ENCODE measurements at regions of chr9 and their contacts with region 1.

Region 1: GRCh38 chr9:99162759-99163364 is 57.9 kb downstream of the TGFBR1 start:
- DNase-seq: no peak
- ATAC-seq: peak; percentile 55
- H3K4me3 Mint-ChIP-seq: no peak overlapping the region
- H3K27ac Mint-ChIP-seq: peak overlapping the region; percentile 66
- H3K4me1 Mint-ChIP-seq: peaks cover 45% of the 10 kb centered on the region
- H3K27me3 Mint-ChIP-seq: no peaks in the 10 kb centered on the region
- CTCF ChIP-seq: peak; percentile 22

Region 2: GRCh38 chr9:99513441-99514112 is 350.7 kb after region 1 on chr9:
- CTCF ChIA-PET with region 1: no interaction called
- POLR2A ChIA-PET with region 1: no interaction called
- intact Hi-C with region 1: loop called (anchors 5 kb)
- DNase-seq: peak; percentile 22
- ATAC-seq: peak; percentile 49
- H3K4me3 Mint-ChIP-seq: peak overlapping the region; percentile 61
- H3K27ac Mint-ChIP-seq: peak overlapping the region; percentile 84
- H3K4me1 Mint-ChIP-seq: peaks cover 88% of the 10 kb centered on the region
- H3K27me3 Mint-ChIP-seq: no peaks in the 10 kb centered on the region
- CTCF ChIP-seq: no peak

Region 3: GRCh38 chr9:100011062-100011681 is 848.3 kb after region 1 on chr9:
- CTCF ChIA-PET with region 1: interaction called, 20 read pairs
- POLR2A ChIA-PET with region 1: no interaction called
- intact Hi-C with region 1: loop called (anchors 1 kb)
- DNase-seq: no peak
- ATAC-seq: peak; percentile 62
- H3K4me3 Mint-ChIP-seq: no peak overlapping the region
- H3K27ac Mint-ChIP-seq: no peak overlapping the region
- H3K4me1 Mint-ChIP-seq: no peaks in the 10 kb centered on the region
- H3K27me3 Mint-ChIP-seq: no peaks in the 10 kb centered on the region
- CTCF ChIP-seq: no peak

Region 4: DNA sequence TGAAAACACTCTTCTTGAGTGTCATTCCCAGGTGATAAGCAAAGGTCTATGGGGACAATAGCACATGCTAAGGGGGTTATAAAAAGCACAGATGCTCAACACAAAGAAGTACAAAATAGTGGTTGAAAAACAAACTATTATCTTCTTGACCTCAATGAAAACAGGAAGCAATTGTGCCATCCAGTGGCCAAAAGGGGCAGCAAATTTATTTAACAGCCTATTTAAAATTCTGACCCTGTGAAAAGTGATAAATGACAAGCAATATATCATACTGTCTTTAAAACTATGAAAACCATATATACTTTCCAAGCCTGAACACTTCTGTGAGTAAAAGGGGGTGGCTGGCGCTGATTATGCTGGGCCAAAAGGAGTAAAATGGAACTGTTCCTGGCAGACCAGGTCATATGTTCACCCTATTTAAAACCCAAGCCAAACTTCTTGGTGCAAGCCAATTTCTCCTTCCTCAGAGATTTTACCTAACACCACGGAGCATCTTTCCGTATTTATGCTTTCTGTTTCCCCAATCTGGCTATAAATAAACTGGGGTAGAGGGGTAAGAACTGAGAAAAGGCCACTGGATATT is 1160.2 kb after region 1 on chr9:
- CTCF ChIA-PET with region 1: interaction called, 25 read pairs
- POLR2A ChIA-PET with region 1: no interaction called
- intact Hi-C with region 1: loop called (anchors 1 kb)
- DNase-seq: no peak
- ATAC-seq: no peak
- H3K4me3 Mint-ChIP-seq: no peak overlapping the region
- H3K27ac Mint-ChIP-seq: no peak overlapping the region
- H3K4me1 Mint-ChIP-seq: peaks cover 2% of the 10 kb centered on the region
- H3K27me3 Mint-ChIP-seq: no peaks in the 10 kb centered on the region
- CTCF ChIP-seq: no peak

Measured in activated B cell treated with CpG ODN at 0.5 μM for 24 hours (primary cell).